Motor neuron (in vitro differentiated cells): ENCODE measurements at regions of chr4 and their contacts with region 1.

Region 1: GRCh38 chr4:115090483-115091075 is 22.8 kb downstream of the NDST4 start:
- ATAC-seq: peak in 1 of 8 experiments; percentile 36
- H3K4me3 ChIP-seq: no peak overlapping the region
- H3K27ac ChIP-seq: no peak overlapping the region
- H3K4me1 ChIP-seq: no peaks in the 10 kb centered on the region

Region 2: DNA sequence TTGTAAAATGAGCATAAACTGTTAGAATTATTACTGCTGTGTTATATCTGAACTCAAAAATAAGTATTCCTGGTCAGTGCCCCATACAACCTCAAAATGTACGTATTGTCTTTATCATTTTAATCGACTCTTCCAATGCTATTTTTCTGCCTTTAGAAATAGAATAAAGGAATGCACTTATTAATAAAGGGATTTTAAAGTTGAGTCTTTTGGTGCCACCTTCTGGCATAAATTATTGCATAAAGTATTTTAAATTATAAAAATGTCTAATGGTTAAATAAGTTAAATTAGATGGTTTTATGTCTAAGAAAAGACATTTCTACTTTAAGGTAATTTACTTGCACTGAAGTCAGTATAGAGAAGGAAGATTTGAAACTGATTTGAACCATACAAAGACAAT is 446.8 kb after region 1 on chr4:
- in situ Hi-C with region 1: loop called in 1 of 9 experiments (anchors 25 kb)
- ATAC-seq: no peak
- H3K4me3 ChIP-seq: no peak overlapping the region
- H3K27ac ChIP-seq: no peak overlapping the region
- H3K4me1 ChIP-seq: no peaks in the 10 kb centered on the region